MCF 10A (cell line): ENCODE measurements at regions of chr15 and their contacts with region 1.

Region 1: GRCh38 chr15:51132384-51133139 is 37.9 kb upstream of the TNFAIP8L3 start:
- DNase-seq: peak; percentile 94
- H3K4me3 Mint-ChIP-seq: no peak overlapping the region
- H3K27ac Mint-ChIP-seq: peak overlapping the region; percentile 77
- H3K4me1 Mint-ChIP-seq: peaks cover 47% of the 10 kb centered on the region
- H3K27me3 Mint-ChIP-seq: no peaks in the 10 kb centered on the region
- CTCF ChIP-seq: peak; percentile 82

Region 2: GRCh38 chr15:51121118-51121517 is 11.4 kb before region 1 on chr15:
- CTCF ChIA-PET with region 1: interaction called, 11 read pairs
- POLR2A ChIA-PET with region 1: interaction called, 9 read pairs
- intact Hi-C with region 1: no loop called
- DNase-seq: peak; percentile 96
- H3K4me3 Mint-ChIP-seq: no peak overlapping the region
- H3K27ac Mint-ChIP-seq: peak overlapping the region; percentile 63
- H3K4me1 Mint-ChIP-seq: peaks cover 27% of the 10 kb centered on the region
- H3K27me3 Mint-ChIP-seq: no peaks in the 10 kb centered on the region
- CTCF ChIP-seq: no peak

Region 3: DNA sequence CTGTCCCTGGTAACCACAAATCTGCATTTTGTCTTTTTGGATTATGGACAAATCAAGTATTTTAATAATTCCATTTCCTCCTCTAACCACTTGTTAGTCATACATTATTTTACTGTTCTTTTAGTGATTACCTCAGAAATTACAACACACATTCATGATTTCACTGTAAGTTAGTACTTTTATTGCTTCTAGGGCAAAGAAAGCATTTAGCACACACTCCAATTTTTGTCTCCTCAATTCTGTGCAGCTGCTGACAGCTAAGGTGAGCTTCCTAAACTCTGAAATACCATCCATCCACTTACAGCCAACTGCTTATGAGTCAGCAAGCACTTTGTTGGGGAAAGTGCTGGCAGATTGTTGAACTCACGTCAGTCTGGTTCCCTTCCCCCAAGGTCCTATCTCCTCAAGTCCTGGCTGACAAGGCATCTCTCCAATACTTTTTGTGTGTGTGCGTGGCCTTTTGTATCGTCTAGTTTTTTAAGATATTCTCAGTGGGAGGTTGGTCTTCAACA is 11.5 kb after region 1 on chr15:
- CTCF ChIA-PET with region 1: interaction called, 9 read pairs
- POLR2A ChIA-PET with region 1: interaction called, 3 read pairs
- intact Hi-C with region 1: loop called (anchors 1 kb)
- DNase-seq: peak; percentile 88
- H3K4me3 Mint-ChIP-seq: peak overlapping the region; percentile 26
- H3K27ac Mint-ChIP-seq: peak overlapping the region; percentile 66
- H3K4me1 Mint-ChIP-seq: peaks cover 12% of the 10 kb centered on the region
- H3K27me3 Mint-ChIP-seq: no peaks in the 10 kb centered on the region
- CTCF ChIP-seq: no peak